ENCODE measurements at regions of chr4 and their contacts with region 1.

Region 1: DNA sequence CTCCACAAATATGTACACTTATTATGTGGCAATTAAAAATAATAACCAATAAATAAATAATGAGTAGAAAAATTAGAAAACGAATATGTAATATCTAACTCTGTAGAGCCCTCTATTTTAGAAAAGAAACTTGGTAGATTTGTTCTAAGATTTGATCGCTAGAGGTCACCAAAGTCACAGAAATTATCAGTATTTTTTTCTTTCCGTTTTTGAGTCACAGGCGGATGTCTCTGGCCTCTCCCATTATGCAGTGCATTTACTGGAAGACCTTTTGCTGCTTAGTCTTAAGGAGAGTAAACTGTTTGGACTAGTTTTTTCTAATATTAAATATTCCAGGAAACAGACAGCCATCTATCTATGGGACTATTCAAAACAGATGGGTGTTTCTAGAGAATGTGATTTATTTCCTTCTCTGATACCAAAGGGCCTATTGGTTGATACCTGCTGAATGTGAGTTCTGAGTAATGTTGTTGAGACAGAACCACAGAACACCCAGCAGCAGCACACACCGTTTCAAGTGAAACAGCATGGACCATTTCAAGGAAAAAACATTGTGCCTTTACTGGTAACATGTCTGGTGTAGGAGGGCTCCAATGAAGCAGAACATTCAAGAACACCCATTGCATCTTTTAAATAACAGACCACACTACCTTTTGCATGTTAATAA is 34.0 kb upstream of the GYPA start:
- DNase-seq: peak in 1 of 2 experiments; percentile 52
- H3K4me3 ChIP-seq: no peak overlapping the region
- H3K4me1 ChIP-seq: no peaks in the 10 kb centered on the region
- H3K27me3 ChIP-seq: peaks cover 5% of the 10 kb centered on the region; the same call in 1 of the 2 replicates

Region 2: GRCh38 chr4:143375313-143376073 is 799.0 kb before region 1 on chr4:
- in situ Hi-C with region 1: no loop called
- DNase-seq: peak; percentile 12 to 57
- H3K4me3 ChIP-seq: no peak overlapping the region
- H3K4me1 ChIP-seq: peaks cover 30% of the 10 kb centered on the region
- H3K27me3 ChIP-seq: no peaks in the 10 kb centered on the region

Region 3: DNA sequence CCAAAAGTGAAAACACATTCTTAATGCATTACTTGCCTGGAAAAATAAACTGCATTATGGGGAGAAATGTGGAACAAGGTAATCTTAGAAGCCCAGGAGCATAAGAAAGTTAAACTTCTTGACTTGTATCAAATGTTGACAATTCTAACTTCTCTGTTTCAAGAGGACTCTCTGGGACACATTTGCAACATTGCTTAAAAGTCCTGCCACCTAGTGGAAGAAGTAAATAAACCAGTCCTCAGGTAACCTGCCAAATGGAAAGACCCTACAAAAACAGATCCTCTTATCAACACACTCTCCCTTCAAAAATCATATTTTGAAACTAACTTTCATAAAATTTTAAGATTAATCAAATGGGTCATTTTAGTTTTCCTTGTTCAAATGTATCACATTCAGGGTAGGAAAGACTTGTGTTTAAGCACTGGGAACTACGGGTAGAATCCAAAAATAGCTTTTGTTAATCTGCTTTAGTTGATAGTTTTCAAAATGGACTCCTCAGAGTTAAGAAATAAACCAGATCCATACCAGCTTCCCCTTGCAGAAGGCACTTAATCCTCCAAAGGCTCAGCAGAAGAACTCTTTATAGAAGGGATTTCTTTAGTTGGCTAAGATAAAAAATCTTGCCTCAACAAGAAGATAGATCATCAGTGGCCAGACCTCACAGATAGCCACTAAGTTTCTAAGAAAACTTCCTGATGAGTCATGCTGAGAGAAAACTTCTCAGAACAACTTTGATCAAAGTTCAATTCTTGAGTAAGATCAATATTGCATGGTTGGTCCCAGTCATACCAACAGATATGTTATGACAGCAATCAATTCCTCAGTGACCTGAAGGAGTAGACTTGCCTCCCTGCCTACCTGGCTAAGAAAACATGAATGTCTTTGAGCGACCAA is 613.1 kb after region 1 on chr4:
- in situ Hi-C with region 1: loop called (anchors 25 kb)
- DNase-seq: peak in 1 of 2 experiments; percentile 59
- H3K4me3 ChIP-seq: no peak overlapping the region
- H3K4me1 ChIP-seq: no peaks in the 10 kb centered on the region
- H3K27me3 ChIP-seq: no peaks in the 10 kb centered on the region

Region 4: GRCh38 chr4:145061318-145061920 is 886.9 kb after region 1 on chr4:
- in situ Hi-C with region 1: loop called (anchors 25 kb)
- DNase-seq: peak in 1 of 2 experiments; percentile 55
- H3K4me3 ChIP-seq: no peak overlapping the region
- H3K4me1 ChIP-seq: peaks cover 18% of the 10 kb centered on the region
- H3K27me3 ChIP-seq: no peaks in the 10 kb centered on the region